CD4-positive, alpha-beta T cell (primary cell): ENCODE measurements at regions of chr11 and their contacts with region 1.

Region 1: DNA sequence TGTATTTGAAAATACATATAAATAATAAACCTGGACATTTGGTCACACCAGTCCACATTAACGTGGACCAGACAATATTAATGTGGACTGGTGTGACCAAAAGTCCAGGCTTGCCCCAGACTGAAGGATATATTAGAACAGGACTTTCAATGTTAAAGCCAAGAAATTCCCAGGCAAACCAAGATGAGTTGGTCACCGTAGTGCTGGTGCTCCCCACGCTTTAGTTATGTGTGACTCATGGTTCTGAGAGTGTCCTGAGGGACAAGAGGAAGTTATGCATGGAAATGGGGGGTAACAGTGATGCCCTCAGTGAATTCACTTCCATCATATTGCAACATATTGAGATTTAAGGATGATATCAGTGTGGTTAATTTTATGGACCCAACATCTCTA is 31.4 kb downstream of the POU2AF1 start:
- DNase-seq: no peak
- ATAC-seq: no peak
- H3K4me3 ChIP-seq: no peak overlapping the region
- H3K4me3 Mint-ChIP-seq: no peak overlapping the region
- H3K27ac ChIP-seq: no peak overlapping the region
- H3K27ac Mint-ChIP-seq: no peak overlapping the region
- H3K4me1 ChIP-seq: no peaks in the 10 kb centered on the region
- H3K4me1 Mint-ChIP-seq: no peaks in the 10 kb centered on the region
- H3K27me3 ChIP-seq: no peaks in the 10 kb centered on the region
- H3K27me3 Mint-ChIP-seq: no peaks in the 10 kb centered on the region
- CTCF ChIP-seq: no peak

Region 2: DNA sequence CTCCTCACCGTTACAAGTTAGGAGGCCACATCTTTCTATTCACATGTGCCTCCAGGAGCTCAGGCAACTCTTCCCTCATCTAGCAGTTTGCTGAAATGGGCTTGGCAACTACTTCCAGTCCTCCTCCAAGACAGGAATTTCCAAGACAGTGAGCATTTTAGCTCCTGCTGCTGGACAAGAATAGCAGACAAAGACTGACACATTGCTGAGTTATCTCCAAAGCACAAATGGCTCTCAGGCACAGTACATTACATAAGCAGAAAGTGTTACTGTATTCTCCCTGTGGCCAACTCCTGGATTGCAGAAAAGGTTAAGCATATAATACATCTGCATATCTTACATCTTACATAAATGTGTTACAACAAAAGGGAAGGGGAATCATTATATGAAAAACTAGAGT is 185.4 kb before region 1 on chr11:
- CTCF ChIA-PET with region 1: no interaction called
- POLR2A ChIA-PET with region 1: no interaction called
- intact Hi-C with region 1: no loop called
- DNase-seq: no peak
- ATAC-seq: no peak
- H3K4me3 ChIP-seq: no peak overlapping the region
- H3K4me3 Mint-ChIP-seq: no peak overlapping the region
- H3K27ac ChIP-seq: no peak overlapping the region
- H3K27ac Mint-ChIP-seq: no peak overlapping the region
- H3K4me1 ChIP-seq: no peaks in the 10 kb centered on the region
- H3K4me1 Mint-ChIP-seq: no peaks in the 10 kb centered on the region
- H3K27me3 ChIP-seq: no peaks in the 10 kb centered on the region
- H3K27me3 Mint-ChIP-seq: peaks cover 14% of the 10 kb centered on the region
- CTCF ChIP-seq: no peak

Region 3: GRCh38 chr11:111308140-111308539 is 39.6 kb before region 1 on chr11:
- CTCF ChIA-PET with region 1: no interaction called
- POLR2A ChIA-PET with region 1: no interaction called
- intact Hi-C with region 1: loop called in 1 of 2 experiments (anchors 5 kb)
- DNase-seq: no peak
- ATAC-seq: no peak
- H3K4me3 ChIP-seq: no peak overlapping the region
- H3K4me3 Mint-ChIP-seq: no peak overlapping the region
- H3K27ac ChIP-seq: no peak overlapping the region
- H3K27ac Mint-ChIP-seq: no peak overlapping the region
- H3K4me1 ChIP-seq: no peaks in the 10 kb centered on the region
- H3K4me1 Mint-ChIP-seq: no peaks in the 10 kb centered on the region
- H3K27me3 ChIP-seq: peaks cover 6% of the 10 kb centered on the region in 2 experiments
- H3K27me3 Mint-ChIP-seq: peaks cover 35% of the 10 kb centered on the region
- CTCF ChIP-seq: no peak